ENCODE measurements at regions of chr9 and their contacts with region 1.

Region 1: GRCh38 chr9:128341435-128341849 is 1.1 kb downstream of the SLC27A4 start:
- DNase-seq: peak; percentile 78
- H3K4me3 Mint-ChIP-seq: peak overlapping the region; percentile 99
- H3K27ac Mint-ChIP-seq: peak overlapping the region; percentile 87
- H3K4me1 Mint-ChIP-seq: peaks cover 10% of the 10 kb centered on the region
- H3K27me3 Mint-ChIP-seq: no peaks in the 10 kb centered on the region

Region 2: GRCh38 chr9:128218518-128219389 is 122.7 kb before region 1 on chr9:
- CTCF ChIA-PET with region 1: no interaction called
- POLR2A ChIA-PET with region 1: no interaction called
- DNase-seq: peak; percentile 97
- H3K4me3 Mint-ChIP-seq: peak overlapping the region; percentile 74
- H3K27ac Mint-ChIP-seq: peak overlapping the region; percentile 51
- H3K4me1 Mint-ChIP-seq: peaks cover 12% of the 10 kb centered on the region
- H3K27me3 Mint-ChIP-seq: peaks cover 11% of the 10 kb centered on the region

Region 3: GRCh38 chr9:128296337-128297220 is 44.9 kb before region 1 on chr9:
- CTCF ChIA-PET with region 1: interaction called, 29 read pairs
- POLR2A ChIA-PET with region 1: no interaction called
- DNase-seq: no peak
- H3K4me3 Mint-ChIP-seq: no peak overlapping the region
- H3K27ac Mint-ChIP-seq: no peak overlapping the region
- H3K4me1 Mint-ChIP-seq: peaks cover 1% of the 10 kb centered on the region
- H3K27me3 Mint-ChIP-seq: no peaks in the 10 kb centered on the region

Region 4: GRCh38 chr9:128322404-128323211 is 18.8 kb before region 1 on chr9 and contains the starts of genes COQ4 and TRUB2:
- CTCF ChIA-PET with region 1: interaction called, 13 read pairs
- POLR2A ChIA-PET with region 1: interaction called, 4 read pairs
- DNase-seq: peak; percentile 94
- H3K4me3 Mint-ChIP-seq: peak within 1 kb of the TSS; percentile 94
- H3K27ac Mint-ChIP-seq: peak within 1 kb of the TSS; percentile 96
- H3K4me1 Mint-ChIP-seq: peaks cover 23% of the 10 kb centered on the region
- H3K27me3 Mint-ChIP-seq: no peaks in the 10 kb centered on the region
- total RNA-seq, gene COQ4: 27.6 to 28.4 TPM
- total RNA-seq, gene TRUB2: 16.9 to 18.9 TPM

Region 5: GRCh38 chr9:128370826-128371621 is 29.6 kb after region 1 on chr9 and contains the start of gene URM1:
- CTCF ChIA-PET with region 1: interaction called, 16 read pairs
- POLR2A ChIA-PET with region 1: interaction called, 10 read pairs
- DNase-seq: peak; percentile 97
- H3K4me3 Mint-ChIP-seq: peak within 1 kb of the TSS; percentile 90
- H3K27ac Mint-ChIP-seq: peak within 1 kb of the TSS; percentile 93
- H3K4me1 Mint-ChIP-seq: peaks cover 32% of the 10 kb centered on the region
- H3K27me3 Mint-ChIP-seq: no peaks in the 10 kb centered on the region
- total RNA-seq, gene URM1: 62.8 to 64.3 TPM

Region 6: GRCh38 chr9:128558431-128559310 is 217.2 kb after region 1 on chr9:
- CTCF ChIA-PET with region 1: no interaction called
- POLR2A ChIA-PET with region 1: no interaction called
- DNase-seq: peak; percentile 42
- H3K4me3 Mint-ChIP-seq: peak overlapping the region; percentile 36
- H3K27ac Mint-ChIP-seq: peak overlapping the region; percentile 70
- H3K4me1 Mint-ChIP-seq: peaks cover 18% of the 10 kb centered on the region
- H3K27me3 Mint-ChIP-seq: no peaks in the 10 kb centered on the region

Measured in activated CD4-positive, alpha-beta memory T cell treated with anti-CD3 and anti-CD28 coated beads, Interleukin-2, amount 10 ng/mL, durations not matched to agents 7 days and 5 days (primary cell).